Dendritic cell treated with granulocyte-macrophage colony-stimulating factor and Interleukin-4, amounts not matched to agents 40 ng/mL and 50 ng/mL, for 4 days (primary cell): ENCODE measurements at regions of chr1 and their contacts with region 1.

Region 1: GRCh38 chr1:15028102-15028501 is 125.4 kb upstream of the TMEM51 start:
- H3K4me3 Mint-ChIP-seq: no peak overlapping the region
- H3K27ac Mint-ChIP-seq: no peak overlapping the region
- H3K4me1 Mint-ChIP-seq: peaks cover 9% of the 10 kb centered on the region
- H3K27me3 Mint-ChIP-seq: peaks cover 7% of the 10 kb centered on the region

Region 2: GRCh38 chr1:14778898-14779865 is 248.9 kb before region 1 on chr1:
- intact Hi-C with region 1: loop called (anchors 2 kb)
- H3K4me3 Mint-ChIP-seq: no peak overlapping the region
- H3K27ac Mint-ChIP-seq: no peak overlapping the region
- H3K4me1 Mint-ChIP-seq: peaks cover 48% of the 10 kb centered on the region
- H3K27me3 Mint-ChIP-seq: no peaks in the 10 kb centered on the region

Region 3: DNA sequence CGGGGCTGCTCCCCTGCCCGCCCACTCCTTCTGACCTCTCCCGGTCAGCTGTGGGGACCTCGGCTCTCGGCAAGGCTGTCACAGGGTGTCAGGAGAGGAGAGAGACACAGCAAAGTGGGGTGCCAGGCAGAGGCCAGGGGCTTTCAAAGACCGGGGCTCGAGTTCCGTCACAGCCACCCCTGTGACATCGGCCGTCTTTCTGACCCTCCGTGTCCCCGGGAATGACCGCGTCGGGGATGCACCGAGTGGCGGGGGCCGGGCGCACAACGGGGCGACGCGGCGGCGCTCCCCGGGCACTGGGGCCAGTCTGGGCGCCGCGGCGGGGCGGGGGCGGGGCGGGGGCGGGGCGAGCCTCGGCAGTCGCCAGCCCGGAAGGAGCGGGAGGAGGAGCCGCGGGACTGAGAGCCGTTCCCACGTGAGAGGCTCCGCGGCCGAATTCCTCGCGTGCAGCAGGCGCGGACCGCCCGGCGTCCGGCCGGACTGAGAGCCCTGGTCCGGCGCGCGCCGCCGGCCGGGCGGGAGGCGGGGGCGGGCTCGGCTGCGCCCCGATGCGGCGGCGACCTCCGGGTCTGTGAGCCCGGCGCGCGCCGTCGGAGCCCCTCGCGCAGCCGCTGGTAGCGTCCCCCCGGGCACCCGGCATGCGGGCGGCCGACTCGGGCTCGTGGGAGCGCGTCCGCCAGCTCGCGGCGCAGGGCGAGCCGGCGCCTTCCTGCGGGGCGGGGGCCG is 104.2 kb before region 1 on chr1:
- intact Hi-C with region 1: loop called (anchors 10 kb)
- H3K4me3 Mint-ChIP-seq: peak overlapping the region; percentile 60
- H3K27ac Mint-ChIP-seq: no peak overlapping the region
- H3K4me1 Mint-ChIP-seq: peaks cover 12% of the 10 kb centered on the region
- H3K27me3 Mint-ChIP-seq: peaks cover 84% of the 10 kb centered on the region